ENCODE measurements at regions of chr18 and their contacts with region 1.

Region 1: DNA sequence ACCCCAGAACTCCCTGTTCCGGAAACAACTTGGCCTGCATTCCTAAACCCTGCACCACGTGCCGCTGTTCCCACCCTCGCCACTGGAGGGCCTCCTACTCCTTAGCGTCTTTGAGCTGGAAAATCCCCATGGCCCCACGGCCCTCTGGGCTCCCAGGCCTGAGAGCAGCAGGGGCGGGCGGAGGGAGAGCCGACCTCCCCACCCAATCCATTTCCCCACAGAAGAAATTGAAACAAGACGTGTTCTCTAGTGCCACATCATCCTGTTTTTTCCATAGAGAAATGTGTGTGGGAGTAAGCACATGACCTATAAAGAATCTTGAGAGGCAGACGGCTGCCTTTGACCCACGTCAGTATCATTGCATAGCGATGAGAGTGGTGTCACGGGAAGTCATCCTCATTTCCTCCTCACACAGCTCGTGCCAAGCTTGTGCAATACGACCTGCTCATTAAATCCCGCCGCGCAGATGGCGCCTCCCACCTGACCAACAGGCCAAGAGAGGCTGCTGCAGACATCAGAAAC is 79.2 kb downstream of the LAMA1 start:
- DNase-seq: peak; percentile 96
- H3K4me3 ChIP-seq: peak overlapping the region; percentile 34
- CTCF ChIP-seq: peak; percentile 77

Region 2: DNA sequence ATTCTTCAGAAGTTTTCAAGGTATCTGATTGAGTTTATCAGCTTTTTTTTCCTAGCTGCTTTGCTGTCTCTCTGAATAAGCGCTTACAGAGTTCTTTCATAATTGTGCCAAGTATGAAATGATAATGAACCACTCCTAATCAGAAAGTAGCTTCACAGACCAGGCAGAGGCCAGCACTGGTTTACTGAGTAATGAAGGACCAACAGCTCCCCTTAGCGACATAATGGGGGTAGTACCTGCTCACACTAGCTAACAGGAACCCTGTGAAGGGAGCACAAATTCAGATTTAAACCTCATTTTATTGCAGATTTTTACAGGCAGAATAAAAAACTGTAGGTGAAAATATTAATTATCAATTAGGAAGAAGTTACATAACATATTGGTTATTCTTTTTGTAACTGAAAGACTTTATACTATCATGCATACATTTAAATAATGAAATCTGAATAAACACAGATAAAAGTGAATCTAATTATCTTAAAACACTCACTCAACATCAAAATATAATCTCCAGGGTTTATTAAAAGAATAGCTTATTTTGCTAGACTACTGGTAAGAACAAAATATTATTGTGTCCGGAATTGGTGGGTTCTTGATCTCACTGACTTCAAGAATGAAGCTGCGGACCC is 138.8 kb after region 1 on chr18:
- CTCF ChIA-PET with region 1: interaction called, 45 read pairs
- POLR2A ChIA-PET with region 1: no interaction called
- DNase-seq: peak; percentile 44
- H3K4me3 ChIP-seq: no peak overlapping the region
- CTCF ChIP-seq: peak; percentile 65

Measured in AG04449 (cell line).